Activated CD4-positive, alpha-beta T cell treated with anti-CD3 and anti-CD28 coated beads, Interleukin-2, amount 10 ng/mL, durations not matched to agents 7 days and 5 days (primary cell): ENCODE measurements at regions of chr11 and their contacts with region 1.

Region 1: GRCh38 chr11:66638177-66639065 is at the start of gene RBM4:
- DNase-seq: peak; percentile 99
- H3K4me3 Mint-ChIP-seq: peak within 1 kb of the TSS; percentile 91
- H3K27ac Mint-ChIP-seq: peak within 1 kb of the TSS; percentile 96
- H3K4me1 Mint-ChIP-seq: peaks cover 63% of the 10 kb centered on the region
- H3K27me3 Mint-ChIP-seq: no peaks in the 10 kb centered on the region
- total RNA-seq, gene RBM4: 124 to 137 TPM

Region 2: GRCh38 chr11:66619080-66619554 is 19.3 kb before region 1 on chr11:
- CTCF ChIA-PET with region 1: interaction called, 23 read pairs
- POLR2A ChIA-PET with region 1: interaction called, 7 read pairs
- DNase-seq: peak; percentile 66
- H3K4me3 Mint-ChIP-seq: peak overlapping the region; percentile 98
- H3K27ac Mint-ChIP-seq: peak overlapping the region; percentile 99
- H3K4me1 Mint-ChIP-seq: peaks cover 69% of the 10 kb centered on the region
- H3K27me3 Mint-ChIP-seq: no peaks in the 10 kb centered on the region

Region 3: GRCh38 chr11:66625041-66625751 is 13.2 kb before region 1 on chr11:
- CTCF ChIA-PET with region 1: interaction called, 23 read pairs
- POLR2A ChIA-PET with region 1: interaction called, 3 read pairs
- DNase-seq: no peak
- H3K4me3 Mint-ChIP-seq: no peak overlapping the region
- H3K27ac Mint-ChIP-seq: no peak overlapping the region
- H3K4me1 Mint-ChIP-seq: peaks cover 39% of the 10 kb centered on the region
- H3K27me3 Mint-ChIP-seq: no peaks in the 10 kb centered on the region

Region 4: DNA sequence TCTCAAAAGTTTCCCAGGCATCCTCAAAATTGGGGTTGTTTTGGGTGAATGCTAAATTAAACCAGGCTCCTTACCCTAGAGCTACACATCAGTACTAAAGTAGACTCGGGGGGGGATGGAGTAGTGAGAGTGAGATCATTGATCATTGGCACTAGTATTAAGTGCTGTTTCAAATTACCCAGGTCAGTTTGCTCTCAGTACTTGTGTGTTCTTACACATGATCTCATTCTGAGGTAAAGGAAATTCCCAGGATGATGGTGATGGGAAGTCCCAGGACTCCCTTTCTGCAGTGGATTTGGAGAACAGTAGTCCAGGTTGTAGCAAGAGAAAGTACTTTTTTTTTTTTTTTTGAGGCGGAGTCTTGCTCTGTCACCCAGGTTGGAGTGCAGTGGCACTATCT is 12.6 kb after region 1 on chr11:
- CTCF ChIA-PET with region 1: interaction called, 16 read pairs
- POLR2A ChIA-PET with region 1: interaction called, 7 read pairs
- DNase-seq: no peak
- H3K4me3 Mint-ChIP-seq: no peak overlapping the region
- H3K27ac Mint-ChIP-seq: no peak overlapping the region
- H3K4me1 Mint-ChIP-seq: peaks cover 27% of the 10 kb centered on the region
- H3K27me3 Mint-ChIP-seq: no peaks in the 10 kb centered on the region